K562 (cell line): ENCODE measurements at regions of chr12 and their contacts with region 1.

Region 1: DNA sequence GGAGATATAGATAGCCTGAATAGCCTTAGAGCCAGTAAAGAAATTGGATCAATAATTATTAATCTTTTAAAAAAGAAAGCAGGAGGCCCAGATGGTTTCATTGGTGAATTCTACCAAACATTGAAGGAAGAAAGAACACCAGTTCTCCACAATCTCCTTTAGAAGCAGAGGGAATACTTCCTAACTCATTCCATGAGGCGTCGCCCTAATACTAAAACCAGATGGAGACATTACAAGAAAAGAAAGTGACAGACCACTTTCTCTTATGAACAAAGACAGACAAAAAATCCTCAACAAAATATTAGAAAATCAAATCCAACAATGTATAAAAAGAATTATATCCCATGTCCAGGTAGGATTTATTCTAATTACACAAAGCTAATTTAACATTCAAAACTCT is 362.6 kb downstream of the BCAT1 start:
- DNase-seq: peak in 1 of 4 experiments; percentile 23
- ATAC-seq: no peak
- H3K4me3 ChIP-seq: no peak overlapping the region
- H3K27ac ChIP-seq: no peak overlapping the region
- H3K4me1 ChIP-seq: no peaks in the 10 kb centered on the region; a peak in 1 of 5 replicates
- H3K27me3 ChIP-seq: no peaks in the 10 kb centered on the region; a peak in 1 of 5 replicates
- CTCF ChIP-seq: peak; percentile 22 to 60 (median 34); a peak in 3 of 6 replicates
- EP300 ChIP-seq: no peak
- POLR2A ChIP-seq: no peak
- RAD21 ChIP-seq: peak; percentile 25 to 69

Region 2: GRCh38 chr12:23484238-23484637 is 1102.1 kb before region 1 on chr12:
- CTCF ChIA-PET with region 1: no interaction called
- POLR2A ChIA-PET with region 1: no interaction called
- in situ Hi-C with region 1: no loop called
- intact Hi-C with region 1: no loop called
- DNase-seq: no peak
- ATAC-seq: no peak
- H3K4me3 ChIP-seq: no peak overlapping the region
- H3K27ac ChIP-seq: no peak overlapping the region
- H3K4me1 ChIP-seq: peaks cover 0 to 3% of the 10 kb centered on the region in 2 experiments; a peak in 1 of 5 replicates
- H3K27me3 ChIP-seq: no peaks in the 10 kb centered on the region
- CTCF ChIP-seq: no peak
- EP300 ChIP-seq: no peak
- POLR2A ChIP-seq: no peak
- RAD21 ChIP-seq: no peak

Region 3: GRCh38 chr12:24488091-24488596 is 98.1 kb before region 1 on chr12:
- CTCF ChIA-PET with region 1: no interaction called
- POLR2A ChIA-PET with region 1: no interaction called
- in situ Hi-C with region 1: no loop called
- intact Hi-C with region 1: no loop called
- DNase-seq: no peak
- ATAC-seq: no peak
- H3K4me3 ChIP-seq: no peak overlapping the region
- H3K27ac ChIP-seq: no peak overlapping the region
- H3K4me1 ChIP-seq: no peaks in the 10 kb centered on the region
- H3K27me3 ChIP-seq: no peaks in the 10 kb centered on the region
- CTCF ChIP-seq: no peak
- EP300 ChIP-seq: no peak
- POLR2A ChIP-seq: no peak
- RAD21 ChIP-seq: no peak

Region 4: DNA sequence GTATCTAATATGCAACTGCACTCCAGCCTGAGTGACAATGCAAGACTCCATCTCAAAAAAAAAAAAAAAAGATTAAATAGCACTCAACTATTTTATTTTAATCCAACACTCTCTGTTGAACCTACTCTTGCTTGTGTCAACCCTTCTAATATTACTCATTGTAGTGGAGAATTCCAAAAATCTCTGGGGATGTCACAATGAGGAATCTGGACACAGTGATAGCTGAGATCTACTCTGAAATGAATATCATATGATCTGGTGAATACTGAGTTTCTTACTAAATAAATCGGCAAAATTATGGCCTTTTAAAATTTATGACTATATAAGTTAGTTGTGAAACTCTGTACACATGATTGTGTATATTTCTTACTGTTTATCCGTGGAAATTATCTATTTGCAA is 55.6 kb before region 1 on chr12:
- CTCF ChIA-PET with region 1: no interaction called
- POLR2A ChIA-PET with region 1: no interaction called
- in situ Hi-C with region 1: no loop called
- intact Hi-C with region 1: no loop called
- DNase-seq: no peak
- ATAC-seq: no peak
- H3K4me3 ChIP-seq: no peak overlapping the region
- H3K27ac ChIP-seq: no peak overlapping the region
- H3K4me1 ChIP-seq: no peaks in the 10 kb centered on the region; a peak in 1 of 5 replicates
- H3K27me3 ChIP-seq: peaks cover 0 to 4% of the 10 kb centered on the region in 2 experiments; a peak in 1 of 5 replicates
- CTCF ChIP-seq: no peak
- EP300 ChIP-seq: no peak
- POLR2A ChIP-seq: no peak
- RAD21 ChIP-seq: no peak

Region 5: GRCh38 chr12:24728366-24728765 is 142.1 kb after region 1 on chr12:
- CTCF ChIA-PET with region 1: no interaction called
- POLR2A ChIA-PET with region 1: no interaction called
- in situ Hi-C with region 1: no loop called
- intact Hi-C with region 1: loop called (anchors 1 kb)
- DNase-seq: peak in 1 of 4 experiments; percentile 35
- ATAC-seq: 0 out of 3 replicates have a peak, but pooled peaks have one; percentile 55
- H3K4me3 ChIP-seq: no peak overlapping the region
- H3K27ac ChIP-seq: no peak overlapping the region
- H3K4me1 ChIP-seq: no peaks in the 10 kb centered on the region
- H3K27me3 ChIP-seq: no peaks in the 10 kb centered on the region
- CTCF ChIP-seq: peak in 1 of 3 experiments; percentile 65; a peak in 3 of 6 replicates
- EP300 ChIP-seq: no peak
- POLR2A ChIP-seq: no peak
- RAD21 ChIP-seq: peak; percentile 33 to 77; a peak in 3 of 4 replicates

Region 6: DNA sequence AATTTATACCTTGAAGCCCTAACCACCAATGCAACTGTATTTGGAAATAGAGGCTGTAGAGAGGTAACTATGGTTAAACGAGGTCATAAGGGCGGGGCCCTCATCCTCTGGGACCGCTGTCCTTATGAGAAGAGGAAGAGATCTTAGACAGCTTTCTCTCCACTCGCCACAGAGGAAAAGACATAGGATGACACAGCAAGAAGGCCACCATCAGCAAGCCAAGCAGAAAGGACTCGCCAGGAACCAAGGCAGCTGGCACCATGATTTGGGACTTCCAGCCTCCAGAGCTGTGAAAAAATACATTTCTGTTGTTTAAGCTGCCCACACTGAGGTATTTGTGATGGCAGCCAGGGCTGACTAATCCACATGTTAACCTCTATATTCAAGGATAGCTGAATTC is 393.0 kb after region 1 on chr12:
- CTCF ChIA-PET with region 1: no interaction called
- POLR2A ChIA-PET with region 1: no interaction called
- in situ Hi-C with region 1: no loop called
- intact Hi-C with region 1: no loop called
- DNase-seq: peak in 2 of 4 experiments; percentile 25 to 53
- ATAC-seq: peak; percentile 86
- H3K4me3 ChIP-seq: no peak overlapping the region
- H3K27ac ChIP-seq: no peak overlapping the region
- H3K4me1 ChIP-seq: peaks cover 0 to 2% of the 10 kb centered on the region in 2 experiments; a peak in 2 of 5 replicates
- H3K27me3 ChIP-seq: no peaks in the 10 kb centered on the region; a peak in 1 of 5 replicates
- CTCF ChIP-seq: no peak
- EP300 ChIP-seq: no peak
- POLR2A ChIP-seq: no peak
- RAD21 ChIP-seq: no peak